ENCODE measurements at regions of chr2 and their contacts with region 1.

Region 1: GRCh38 chr2:240586198-240586918 is at the start of gene CAPN10:
- DNase-seq: peak; percentile 97
- ATAC-seq: peak; percentile 77
- H3K4me3 ChIP-seq: peak within 1 kb of the TSS; percentile 62 to 93 (median 89)
- H3K4me3 Mint-ChIP-seq: peak within 1 kb of the TSS; percentile 93
- H3K27ac ChIP-seq: peak within 1 kb of the TSS; percentile 95 to 97
- H3K27ac Mint-ChIP-seq: peak within 1 kb of the TSS; percentile 94
- H3K4me1 ChIP-seq: peaks cover 32 to 40% of the 10 kb centered on the region in 2 donors
- H3K4me1 Mint-ChIP-seq: peaks cover 54% of the 10 kb centered on the region
- H3K27me3 ChIP-seq: no peaks in the 10 kb centered on the region
- H3K27me3 Mint-ChIP-seq: no peaks in the 10 kb centered on the region
- CTCF ChIP-seq: no peak
- total RNA-seq, gene CAPN10: 73.4 and 88.9 TPM in 2 replicates

Region 2: DNA sequence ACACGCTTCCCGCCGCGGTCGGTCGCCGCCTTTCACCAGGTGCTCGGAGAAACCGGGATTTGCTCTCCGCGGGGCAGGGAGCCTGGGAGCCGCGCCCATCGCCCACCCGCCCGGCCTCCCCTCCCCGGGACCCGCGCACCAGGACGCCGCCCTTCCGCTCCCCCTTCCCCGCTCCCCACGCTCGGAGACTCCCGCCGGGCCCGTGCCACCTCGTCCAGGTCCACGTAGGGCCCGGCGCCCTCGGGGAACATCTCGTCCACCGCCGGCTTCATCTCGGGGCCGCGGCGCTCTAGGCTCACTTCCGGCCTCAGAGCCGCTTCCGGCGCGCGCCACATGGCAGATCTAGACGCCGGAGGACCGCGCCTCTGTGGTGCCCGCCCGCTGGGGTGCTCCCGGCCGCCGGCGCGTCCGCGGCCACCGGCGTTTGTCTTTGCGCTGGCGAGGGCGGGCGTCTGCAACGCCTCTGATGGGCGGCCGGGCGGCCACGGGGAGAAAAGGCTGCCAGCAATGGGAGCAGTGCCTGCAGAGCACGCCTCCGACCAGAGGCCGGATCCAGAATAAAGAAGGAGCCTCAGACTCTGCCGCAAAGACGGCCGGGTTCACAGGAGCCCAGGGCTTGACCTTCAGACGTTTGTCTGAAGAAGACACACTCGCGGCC is 450.2 kb before region 1 on chr2 and contains the start of gene COPS9:
- CTCF ChIA-PET with region 1: no interaction called
- POLR2A ChIA-PET with region 1: no interaction called
- intact Hi-C with region 1: loop called (anchors 2 kb)
- DNase-seq: peak; percentile 89
- ATAC-seq: peak; percentile 88
- H3K4me3 ChIP-seq: peak within 1 kb of the TSS; percentile 63 to 87 (median 67)
- H3K4me3 Mint-ChIP-seq: peak within 1 kb of the TSS; percentile 93
- H3K27ac ChIP-seq: peak within 1 kb of the TSS in 1 of 2 donors; percentile 68
- H3K27ac Mint-ChIP-seq: peak within 1 kb of the TSS; percentile 84
- H3K4me1 ChIP-seq: peaks cover 12 to 22% of the 10 kb centered on the region in 2 donors
- H3K4me1 Mint-ChIP-seq: peaks cover 29% of the 10 kb centered on the region
- H3K27me3 ChIP-seq: no peaks in the 10 kb centered on the region
- H3K27me3 Mint-ChIP-seq: peaks cover 3% of the 10 kb centered on the region
- CTCF ChIP-seq: no peak
- total RNA-seq, gene COPS9: 40.4 and 48.7 TPM in 2 replicates

Region 3: DNA sequence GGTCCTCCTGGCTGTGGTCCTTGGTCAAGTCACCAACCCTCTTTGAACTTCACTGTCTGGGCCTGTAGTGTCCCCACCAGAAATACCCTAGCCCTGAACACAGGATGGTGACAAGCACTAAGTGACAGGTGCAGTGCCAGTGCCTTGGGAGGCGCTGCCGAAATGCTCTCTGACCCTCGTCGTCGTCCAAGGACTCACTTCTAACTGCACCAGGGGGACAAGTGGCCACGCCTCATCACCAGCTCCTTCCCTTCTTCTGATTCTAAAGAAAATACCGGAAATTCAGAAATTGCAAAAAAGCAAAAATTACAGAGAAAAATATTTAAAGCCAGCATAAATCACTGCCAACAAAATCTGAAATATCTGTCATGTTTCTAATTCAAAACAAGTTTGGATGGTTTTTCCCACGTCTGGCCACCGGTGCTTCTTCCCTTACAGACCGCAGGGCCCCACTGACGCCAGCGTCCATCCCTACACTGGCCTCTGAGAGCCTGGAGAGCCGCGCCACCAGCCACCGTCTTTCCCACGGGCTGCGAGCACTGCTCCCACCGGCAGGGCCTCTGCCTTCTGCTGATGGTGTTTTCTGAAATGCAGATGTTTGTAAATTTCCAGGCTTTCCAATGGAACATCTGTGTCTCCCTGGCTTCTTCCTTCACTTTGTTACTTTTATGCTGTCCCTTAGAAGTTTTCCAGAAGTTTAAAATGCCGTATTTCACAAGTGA is 188.3 kb before region 1 on chr2:
- CTCF ChIA-PET with region 1: no interaction called
- POLR2A ChIA-PET with region 1: no interaction called
- intact Hi-C with region 1: no loop called
- DNase-seq: no peak
- ATAC-seq: no peak
- H3K4me3 ChIP-seq: no peak overlapping the region
- H3K4me3 Mint-ChIP-seq: no peak overlapping the region
- H3K27ac ChIP-seq: no peak overlapping the region
- H3K27ac Mint-ChIP-seq: no peak overlapping the region
- H3K4me1 ChIP-seq: no peaks in the 10 kb centered on the region
- H3K4me1 Mint-ChIP-seq: no peaks in the 10 kb centered on the region
- H3K27me3 ChIP-seq: no peaks in the 10 kb centered on the region
- H3K27me3 Mint-ChIP-seq: peaks cover 3% of the 10 kb centered on the region
- CTCF ChIP-seq: no peak

Region 4: DNA sequence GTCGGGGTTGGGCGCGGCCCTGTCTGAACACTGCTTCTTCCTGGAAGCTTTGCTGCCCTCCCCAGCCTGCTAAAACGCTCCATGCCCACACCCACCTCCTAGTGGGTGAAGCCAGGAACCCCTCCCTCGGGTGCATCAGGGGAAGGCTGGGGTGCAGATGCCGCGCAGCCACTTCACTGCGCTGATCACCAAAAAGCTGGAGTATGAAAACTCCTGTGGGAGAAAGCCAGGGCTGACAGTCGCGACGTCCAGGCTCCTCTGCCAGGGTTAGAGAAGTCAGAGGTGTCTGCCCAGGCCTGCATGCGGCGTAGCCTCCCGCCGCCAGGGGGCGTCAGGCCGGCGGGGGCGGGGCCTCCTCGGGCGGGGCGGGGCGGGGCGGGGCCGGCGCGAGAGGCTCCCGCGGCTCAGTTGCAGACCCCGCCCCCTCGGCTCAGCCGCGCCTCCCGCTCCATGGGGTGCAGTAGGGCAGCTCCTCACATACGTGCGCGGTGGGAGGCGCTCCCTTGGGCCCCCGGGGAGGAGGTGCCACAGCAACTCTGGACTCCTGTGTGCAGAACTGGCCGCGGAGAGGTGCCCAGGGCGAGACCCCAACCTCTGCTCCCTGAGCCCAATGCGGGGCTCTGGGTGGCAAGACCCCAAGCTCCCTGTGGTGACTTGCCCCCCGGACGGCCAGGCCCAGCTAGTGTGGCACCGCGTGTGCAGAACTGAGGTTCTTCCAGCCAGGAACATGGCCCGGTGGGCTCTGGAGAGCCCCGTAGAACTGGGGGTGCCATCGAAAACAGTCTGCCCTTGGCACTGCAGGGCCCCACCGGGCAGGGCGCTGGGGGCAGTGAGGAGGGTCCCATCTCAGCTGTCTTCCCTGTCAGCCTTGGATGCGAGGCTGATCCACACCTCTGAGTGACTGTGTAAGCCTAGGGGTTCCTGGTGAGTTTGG is 19.9 kb before region 1 on chr2:
- CTCF ChIA-PET with region 1: interaction called, 126 read pairs
- POLR2A ChIA-PET with region 1: interaction called, 97 read pairs
- intact Hi-C with region 1: loop called (anchors 1 kb)
- DNase-seq: peak; percentile 93
- ATAC-seq: peak; percentile 64
- H3K4me3 ChIP-seq: peak overlapping the region; percentile 26 to 76 (median 51)
- H3K4me3 Mint-ChIP-seq: peak overlapping the region; percentile 94
- H3K27ac ChIP-seq: peak overlapping the region; percentile 84 to 86
- H3K27ac Mint-ChIP-seq: peak overlapping the region; percentile 99
- H3K4me1 ChIP-seq: peaks cover 64 to 75% of the 10 kb centered on the region in 2 donors
- H3K4me1 Mint-ChIP-seq: peaks cover 78% of the 10 kb centered on the region
- H3K27me3 ChIP-seq: no peaks in the 10 kb centered on the region
- H3K27me3 Mint-ChIP-seq: no peaks in the 10 kb centered on the region
- CTCF ChIP-seq: peak; percentile 93

Region 5: GRCh38 chr2:240780023-240780700 is 193.8 kb after region 1 on chr2:
- CTCF ChIA-PET with region 1: no interaction called
- POLR2A ChIA-PET with region 1: no interaction called
- intact Hi-C with region 1: no loop called
- DNase-seq: no peak
- ATAC-seq: no peak
- H3K4me3 ChIP-seq: no peak overlapping the region
- H3K4me3 Mint-ChIP-seq: no peak overlapping the region
- H3K27ac ChIP-seq: no peak overlapping the region
- H3K27ac Mint-ChIP-seq: no peak overlapping the region
- H3K4me1 ChIP-seq: no peaks in the 10 kb centered on the region
- H3K4me1 Mint-ChIP-seq: no peaks in the 10 kb centered on the region
- H3K27me3 ChIP-seq: no peaks in the 10 kb centered on the region
- H3K27me3 Mint-ChIP-seq: peaks cover 4% of the 10 kb centered on the region
- CTCF ChIP-seq: no peak

Measured in B cell (primary cell).